Naive thymus-derived CD4-positive, alpha-beta T cell (primary cell): ENCODE measurements at regions of chr15 and their contacts with region 1.

Region 1: GRCh38 chr15:95284933-95285421 is 1045.5 kb upstream of the NR2F2 start:
- DNase-seq: peak in 2 of 9 donors; percentile 16 to 17
- ATAC-seq: no peak
- H3K4me3 ChIP-seq: no peak overlapping the region
- H3K4me3 Mint-ChIP-seq: peak overlapping the region in 4 of 10 donors; percentile 1 to 69 (median 57)
- H3K27ac ChIP-seq: no peak overlapping the region
- H3K27ac Mint-ChIP-seq: peak overlapping the region in 3 of 9 donors; percentile 26 to 82 (median 62)
- H3K4me1 ChIP-seq: no peaks in the 10 kb centered on the region
- H3K4me1 Mint-ChIP-seq: peaks cover 7 to 59% (median 14%) of the 10 kb centered on the region in 7 donors
- H3K27me3 ChIP-seq: no peaks in the 10 kb centered on the region
- H3K27me3 Mint-ChIP-seq: peaks cover 24 to 58% (median 44%) of the 10 kb centered on the region in 5 donors

Region 2: GRCh38 chr15:95259513-95259912 is 25.5 kb before region 1 on chr15:
- CTCF ChIA-PET with region 1: no interaction called
- POLR2A ChIA-PET with region 1: no interaction called
- intact Hi-C with region 1: loop called in 1 of 2 experiments (anchors 2 kb)
- DNase-seq: peak; percentile 7 to 61 (median 43)
- ATAC-seq: peak; percentile 40
- H3K4me3 ChIP-seq: no peak overlapping the region
- H3K4me3 Mint-ChIP-seq: no peak overlapping the region
- H3K27ac ChIP-seq: no peak overlapping the region
- H3K27ac Mint-ChIP-seq: no peak overlapping the region
- H3K4me1 ChIP-seq: no peaks in the 10 kb centered on the region
- H3K4me1 Mint-ChIP-seq: peaks cover 0 to 13% (median 0%) of the 10 kb centered on the region in 7 donors
- H3K27me3 ChIP-seq: peaks cover 0 to 7% of the 10 kb centered on the region in 2 donors
- H3K27me3 Mint-ChIP-seq: peaks cover 41 to 75% (median 44%) of the 10 kb centered on the region in 5 donors

Region 3: DNA sequence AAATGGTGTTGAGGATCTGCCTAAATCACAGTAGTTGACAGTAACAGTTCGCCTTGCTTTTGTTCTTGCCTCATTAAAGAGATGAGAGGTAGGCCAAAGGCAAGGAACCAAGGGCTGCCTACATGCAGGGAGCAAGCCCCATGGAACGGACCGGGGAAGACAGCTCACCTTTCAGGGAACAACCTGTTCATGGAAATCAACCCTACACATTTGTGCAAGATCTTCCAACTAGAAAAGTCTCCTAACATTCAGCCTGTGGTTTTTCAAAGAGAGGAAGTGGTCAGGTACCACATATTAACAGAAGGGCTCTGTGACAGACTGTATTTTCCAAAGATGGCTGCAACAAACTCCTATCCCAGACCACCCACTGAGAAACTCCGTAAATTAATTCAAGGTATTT is 13.8 kb after region 1 on chr15:
- CTCF ChIA-PET with region 1: no interaction called
- POLR2A ChIA-PET with region 1: no interaction called
- intact Hi-C with region 1: loop called in 1 of 2 experiments (anchors 1 kb)
- DNase-seq: no peak
- ATAC-seq: no peak
- H3K4me3 ChIP-seq: no peak overlapping the region
- H3K4me3 Mint-ChIP-seq: peak overlapping the region in 2 of 10 donors; percentile 38 to 71
- H3K27ac ChIP-seq: no peak overlapping the region
- H3K27ac Mint-ChIP-seq: peak overlapping the region in 1 of 9 donors; percentile 14
- H3K4me1 ChIP-seq: no peaks in the 10 kb centered on the region
- H3K4me1 Mint-ChIP-seq: peaks cover 3 to 33% (median 7%) of the 10 kb centered on the region in 7 donors
- H3K27me3 ChIP-seq: no peaks in the 10 kb centered on the region
- H3K27me3 Mint-ChIP-seq: peaks cover 46 to 56% (median 55%) of the 10 kb centered on the region in 5 donors

Region 4: GRCh38 chr15:95329362-95329761 is 44.4 kb after region 1 on chr15:
- CTCF ChIA-PET with region 1: no interaction called
- POLR2A ChIA-PET with region 1: no interaction called
- intact Hi-C with region 1: no loop called
- DNase-seq: no peak
- ATAC-seq: no peak
- H3K4me3 ChIP-seq: no peak overlapping the region
- H3K4me3 Mint-ChIP-seq: no peak overlapping the region
- H3K27ac ChIP-seq: no peak overlapping the region
- H3K27ac Mint-ChIP-seq: no peak overlapping the region
- H3K4me1 ChIP-seq: no peaks in the 10 kb centered on the region
- H3K4me1 Mint-ChIP-seq: peaks cover 0 to 10% (median 5%) of the 10 kb centered on the region in 7 donors
- H3K27me3 ChIP-seq: no peaks in the 10 kb centered on the region
- H3K27me3 Mint-ChIP-seq: peaks cover 48 to 56% (median 51%) of the 10 kb centered on the region in 5 donors

Region 5: DNA sequence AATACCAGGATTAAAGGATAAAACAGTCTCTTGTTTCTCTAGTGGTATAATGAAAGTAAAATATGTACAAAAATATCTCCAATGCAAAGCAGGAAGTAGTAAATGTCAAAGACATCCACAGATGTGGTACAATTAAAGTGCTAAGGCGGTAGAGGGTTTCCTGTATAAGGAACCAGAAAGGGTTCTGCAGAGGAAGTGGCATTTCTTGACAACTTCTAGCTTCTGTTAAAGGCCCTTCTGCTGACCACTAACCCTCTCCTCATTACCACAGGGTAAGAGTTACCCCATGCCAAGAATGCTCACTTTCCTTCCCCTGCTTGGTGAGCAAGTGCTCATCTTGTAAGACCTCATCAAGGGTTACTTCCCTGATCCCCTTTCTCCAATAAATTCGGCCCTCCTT is 161.9 kb after region 1 on chr15:
- CTCF ChIA-PET with region 1: no interaction called
- POLR2A ChIA-PET with region 1: no interaction called
- intact Hi-C with region 1: loop called in 1 of 2 experiments (anchors 2 kb)
- DNase-seq: peak in 7 of 9 donors; percentile 31 to 79 (median 71)
- ATAC-seq: peak; percentile 92
- H3K4me3 ChIP-seq: peak overlapping the region; percentile 8
- H3K4me3 Mint-ChIP-seq: peak overlapping the region; percentile 58 to 84 (median 72)
- H3K27ac ChIP-seq: no peak overlapping the region
- H3K27ac Mint-ChIP-seq: peak overlapping the region in 7 of 9 donors; percentile 2 to 60 (median 53)
- H3K4me1 ChIP-seq: peaks cover 4 to 14% of the 10 kb centered on the region in 2 donors
- H3K4me1 Mint-ChIP-seq: peaks cover 18 to 47% (median 43%) of the 10 kb centered on the region in 7 donors
- H3K27me3 ChIP-seq: no peaks in the 10 kb centered on the region
- H3K27me3 Mint-ChIP-seq: peaks cover 4 to 16% (median 6%) of the 10 kb centered on the region in 5 donors

Region 6: GRCh38 chr15:95839367-95839782 is 554.4 kb after region 1 on chr15:
- CTCF ChIA-PET with region 1: no interaction called
- POLR2A ChIA-PET with region 1: no interaction called
- intact Hi-C with region 1: loop called in 1 of 2 experiments (anchors 5 kb)
- DNase-seq: peak in 6 of 9 donors; percentile 8 to 53 (median 39)
- ATAC-seq: peak; percentile 71
- H3K4me3 ChIP-seq: no peak overlapping the region
- H3K4me3 Mint-ChIP-seq: peak overlapping the region in 9 of 10 donors; percentile 0 to 81 (median 55)
- H3K27ac ChIP-seq: peak overlapping the region; percentile 24
- H3K27ac Mint-ChIP-seq: peak overlapping the region; percentile 40 to 95 (median 79)
- H3K4me1 ChIP-seq: peaks cover 21 to 22% of the 10 kb centered on the region in 2 donors
- H3K4me1 Mint-ChIP-seq: peaks cover 12 to 49% (median 43%) of the 10 kb centered on the region in 7 donors
- H3K27me3 ChIP-seq: no peaks in the 10 kb centered on the region
- H3K27me3 Mint-ChIP-seq: peaks cover 0 to 7% (median 0%) of the 10 kb centered on the region in 5 donors

Region 7: DNA sequence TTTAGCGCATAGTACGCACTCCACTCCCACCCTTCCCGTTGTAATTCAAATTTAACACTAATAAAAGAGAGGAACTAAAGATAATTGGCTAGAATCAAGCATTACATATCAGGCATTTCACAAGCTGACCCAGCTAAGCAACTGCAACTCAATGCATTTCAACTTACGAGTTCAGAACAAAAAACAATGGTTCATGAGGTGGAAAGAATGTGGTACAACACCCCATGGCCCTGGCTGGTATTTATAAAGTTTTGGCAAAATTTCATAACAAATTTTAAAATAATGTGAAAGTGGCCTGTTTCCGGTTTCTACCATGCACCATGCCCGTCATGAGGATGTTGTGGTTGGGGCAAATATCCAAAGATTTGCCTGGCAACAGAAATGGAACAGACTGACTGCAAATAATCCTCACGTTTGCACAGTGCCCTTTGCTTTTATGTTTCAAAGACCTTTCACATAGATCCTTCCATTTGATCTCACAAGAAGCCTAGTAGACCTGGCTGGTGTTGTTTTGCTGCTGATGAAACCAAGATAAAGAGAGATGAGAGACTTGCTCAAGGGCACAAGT is 590.2 kb after region 1 on chr15:
- CTCF ChIA-PET with region 1: no interaction called
- POLR2A ChIA-PET with region 1: no interaction called
- intact Hi-C with region 1: loop called in 1 of 2 experiments (anchors 10 kb)
- DNase-seq: peak in 7 of 9 donors; percentile 16 to 63 (median 42)
- ATAC-seq: peak; percentile 60
- H3K4me3 ChIP-seq: no peak overlapping the region
- H3K4me3 Mint-ChIP-seq: peak overlapping the region in 5 of 10 donors; percentile 24 to 55 (median 42)
- H3K27ac ChIP-seq: no peak overlapping the region
- H3K27ac Mint-ChIP-seq: peak overlapping the region in 6 of 9 donors; percentile 12 to 85 (median 40)
- H3K4me1 ChIP-seq: peaks cover 4 to 11% of the 10 kb centered on the region in 2 donors
- H3K4me1 Mint-ChIP-seq: peaks cover 11 to 52% (median 34%) of the 10 kb centered on the region in 7 donors
- H3K27me3 ChIP-seq: no peaks in the 10 kb centered on the region
- H3K27me3 Mint-ChIP-seq: peaks cover 0 to 13% (median 4%) of the 10 kb centered on the region in 5 donors

Region 8: DNA sequence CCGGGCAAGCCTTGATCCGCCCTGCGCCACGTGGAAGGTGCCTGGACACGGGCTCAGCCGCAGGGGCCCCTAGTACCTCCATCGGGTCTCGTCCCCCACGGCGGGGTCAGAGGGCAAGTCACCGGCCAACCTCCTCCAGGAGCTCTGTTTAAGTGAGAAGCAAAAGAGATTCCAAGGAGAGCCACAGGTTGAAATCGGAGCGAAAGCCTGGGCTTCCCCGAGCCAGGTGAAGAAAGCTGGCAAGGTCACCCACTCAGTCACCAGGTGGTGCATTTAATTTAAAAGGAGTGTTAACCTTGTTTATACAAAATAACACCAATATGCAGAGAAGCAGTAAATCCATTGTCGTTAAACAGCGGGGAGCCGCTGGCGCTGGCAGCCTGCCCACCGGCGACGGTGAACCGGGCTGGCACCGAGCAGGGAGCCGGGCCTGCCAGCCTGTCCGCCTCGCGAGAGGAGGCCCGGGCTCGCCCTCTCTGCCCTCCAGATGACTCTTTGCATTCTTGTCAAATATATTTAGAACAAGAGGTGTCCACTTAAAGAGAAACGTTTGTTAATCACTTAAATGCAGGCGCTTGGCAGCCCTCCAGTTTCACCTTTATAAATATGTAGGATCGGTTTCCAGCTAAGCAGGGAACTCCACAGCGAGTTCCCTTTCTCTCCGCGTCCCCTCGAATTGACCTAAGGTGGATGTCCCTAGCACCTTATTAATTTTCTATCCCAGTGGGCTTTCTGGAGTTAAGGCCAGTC is 768.2 kb after region 1 on chr15:
- CTCF ChIA-PET with region 1: no interaction called
- POLR2A ChIA-PET with region 1: no interaction called
- intact Hi-C with region 1: loop called in 1 of 2 experiments (anchors 10 kb)
- DNase-seq: no peak
- ATAC-seq: no peak
- H3K4me3 ChIP-seq: no peak overlapping the region
- H3K4me3 Mint-ChIP-seq: peak overlapping the region in 9 of 10 donors; percentile 7 to 75 (median 59)
- H3K27ac ChIP-seq: no peak overlapping the region
- H3K27ac Mint-ChIP-seq: no peak overlapping the region
- H3K4me1 ChIP-seq: no peaks in the 10 kb centered on the region
- H3K4me1 Mint-ChIP-seq: peaks cover 0 to 9% (median 4%) of the 10 kb centered on the region in 7 donors
- H3K27me3 ChIP-seq: peaks cover 0 to 5% of the 10 kb centered on the region in 2 donors
- H3K27me3 Mint-ChIP-seq: peaks cover 55 to 76% (median 68%) of the 10 kb centered on the region in 5 donors